Caco-2 (cell line): ENCODE measurements at regions of chr9 and their contacts with region 1.

Region 1: GRCh38 chr9:14652729-14653377 is 40.4 kb downstream of the ZDHHC21 start:
- DNase-seq: peak in 1 of 2 experiments; percentile 31
- H3K4me3 ChIP-seq: no peak overlapping the region
- H3K4me3 Mint-ChIP-seq: no peak overlapping the region
- H3K27ac Mint-ChIP-seq: no peak overlapping the region
- H3K4me1 ChIP-seq: no peaks in the 10 kb centered on the region
- H3K4me1 Mint-ChIP-seq: no peaks in the 10 kb centered on the region
- H3K27me3 ChIP-seq: no peaks in the 10 kb centered on the region
- H3K27me3 Mint-ChIP-seq: no peaks in the 10 kb centered on the region
- CTCF ChIP-seq: peak; percentile 39 to 60

Region 2: DNA sequence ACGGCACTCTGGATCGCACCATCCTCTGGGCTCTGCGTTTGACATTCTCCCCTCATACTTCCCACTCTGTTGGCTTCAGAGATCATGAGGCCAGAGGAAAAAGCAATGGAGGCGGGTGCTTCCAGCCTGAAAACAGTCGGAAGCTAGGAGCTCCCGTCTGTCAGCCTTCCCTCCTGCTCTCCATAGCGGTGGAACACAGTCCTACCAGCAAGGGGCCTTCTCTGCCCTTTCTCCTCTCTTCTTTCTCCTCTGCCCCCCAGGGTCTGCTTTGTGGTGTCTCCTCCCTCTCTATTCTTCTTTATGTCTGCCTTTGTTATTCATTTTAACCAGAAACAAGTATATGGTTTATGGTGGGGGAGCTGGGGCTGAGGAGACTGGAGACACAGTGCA is 186.4 kb before region 1 on chr9:
- CTCF ChIA-PET with region 1: interaction called, 9 read pairs
- POLR2A ChIA-PET with region 1: no interaction called
- intact Hi-C with region 1: loop called (anchors 2 kb)
- DNase-seq: no peak
- H3K4me3 ChIP-seq: no peak overlapping the region
- H3K4me3 Mint-ChIP-seq: no peak overlapping the region
- H3K27ac Mint-ChIP-seq: no peak overlapping the region
- H3K4me1 ChIP-seq: no peaks in the 10 kb centered on the region
- H3K4me1 Mint-ChIP-seq: no peaks in the 10 kb centered on the region
- H3K27me3 ChIP-seq: no peaks in the 10 kb centered on the region
- H3K27me3 Mint-ChIP-seq: peaks cover 7% of the 10 kb centered on the region
- CTCF ChIP-seq: no peak

Region 3: GRCh38 chr9:14573333-14573732 is 79.5 kb before region 1 on chr9:
- CTCF ChIA-PET with region 1: no interaction called
- POLR2A ChIA-PET with region 1: no interaction called
- intact Hi-C with region 1: no loop called
- DNase-seq: no peak
- H3K4me3 ChIP-seq: no peak overlapping the region
- H3K4me3 Mint-ChIP-seq: no peak overlapping the region
- H3K27ac Mint-ChIP-seq: no peak overlapping the region
- H3K4me1 ChIP-seq: no peaks in the 10 kb centered on the region
- H3K4me1 Mint-ChIP-seq: no peaks in the 10 kb centered on the region
- H3K27me3 ChIP-seq: no peaks in the 10 kb centered on the region
- H3K27me3 Mint-ChIP-seq: peaks cover 5% of the 10 kb centered on the region
- CTCF ChIP-seq: no peak

Region 4: GRCh38 chr9:14616188-14616982 is 36.5 kb before region 1 on chr9:
- CTCF ChIA-PET with region 1: no interaction called
- POLR2A ChIA-PET with region 1: no interaction called
- intact Hi-C with region 1: loop called (anchors 1 kb)
- DNase-seq: peak in 1 of 2 experiments; percentile 16
- H3K4me3 ChIP-seq: no peak overlapping the region
- H3K4me3 Mint-ChIP-seq: no peak overlapping the region
- H3K27ac Mint-ChIP-seq: no peak overlapping the region
- H3K4me1 ChIP-seq: no peaks in the 10 kb centered on the region
- H3K4me1 Mint-ChIP-seq: no peaks in the 10 kb centered on the region
- H3K27me3 ChIP-seq: no peaks in the 10 kb centered on the region
- H3K27me3 Mint-ChIP-seq: no peaks in the 10 kb centered on the region
- CTCF ChIP-seq: peak; percentile 42 to 45

Region 5: DNA sequence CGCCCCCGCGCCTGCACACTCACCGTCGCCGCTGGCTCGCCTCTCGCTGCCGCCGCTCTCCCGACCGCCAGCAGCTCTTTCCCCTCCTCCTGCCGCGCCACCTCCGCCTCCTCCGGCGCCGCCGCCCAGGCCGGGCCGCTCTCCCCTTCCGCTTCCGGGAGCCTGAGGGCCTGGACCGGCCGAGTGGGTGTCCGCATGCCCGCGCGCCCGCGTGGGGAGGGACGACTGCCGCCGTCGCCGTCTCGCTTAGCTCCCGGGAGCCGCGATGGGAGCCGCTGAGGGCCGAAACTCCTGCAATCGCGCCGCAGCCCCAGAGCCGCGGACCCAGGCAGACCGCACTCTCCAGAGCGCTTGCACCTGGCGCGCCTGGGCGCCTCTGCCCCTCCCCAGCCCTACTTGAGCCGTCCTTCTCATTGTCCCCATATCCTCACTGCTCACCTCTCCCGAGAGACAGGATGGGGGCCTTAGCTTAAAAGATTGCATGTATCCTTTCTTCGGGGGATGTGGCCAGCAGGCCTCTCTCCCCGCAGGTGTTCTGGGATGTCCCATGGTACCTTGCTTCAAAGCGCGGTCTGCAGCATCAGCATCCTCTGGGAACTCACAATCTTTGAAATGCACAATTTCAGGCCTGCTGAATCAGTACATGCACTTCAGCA is 40.5 kb after region 1 on chr9 and contains the start of gene ZDHHC21:
- CTCF ChIA-PET with region 1: no interaction called
- POLR2A ChIA-PET with region 1: no interaction called
- intact Hi-C with region 1: no loop called
- DNase-seq: peak; percentile 40 to 60
- H3K4me3 ChIP-seq: peak within 1 kb of the TSS; percentile 47
- H3K4me3 Mint-ChIP-seq: peak within 1 kb of the TSS; percentile 87
- H3K27ac Mint-ChIP-seq: peak within 1 kb of the TSS; percentile 80
- H3K4me1 ChIP-seq: no peaks in the 10 kb centered on the region
- H3K4me1 Mint-ChIP-seq: no peaks in the 10 kb centered on the region
- H3K27me3 ChIP-seq: no peaks in the 10 kb centered on the region
- H3K27me3 Mint-ChIP-seq: peaks cover 3% of the 10 kb centered on the region
- CTCF ChIP-seq: no peak
- total RNA-seq, gene ZDHHC21: 5.8 and 6.8 TPM in 2 replicates

Region 6: DNA sequence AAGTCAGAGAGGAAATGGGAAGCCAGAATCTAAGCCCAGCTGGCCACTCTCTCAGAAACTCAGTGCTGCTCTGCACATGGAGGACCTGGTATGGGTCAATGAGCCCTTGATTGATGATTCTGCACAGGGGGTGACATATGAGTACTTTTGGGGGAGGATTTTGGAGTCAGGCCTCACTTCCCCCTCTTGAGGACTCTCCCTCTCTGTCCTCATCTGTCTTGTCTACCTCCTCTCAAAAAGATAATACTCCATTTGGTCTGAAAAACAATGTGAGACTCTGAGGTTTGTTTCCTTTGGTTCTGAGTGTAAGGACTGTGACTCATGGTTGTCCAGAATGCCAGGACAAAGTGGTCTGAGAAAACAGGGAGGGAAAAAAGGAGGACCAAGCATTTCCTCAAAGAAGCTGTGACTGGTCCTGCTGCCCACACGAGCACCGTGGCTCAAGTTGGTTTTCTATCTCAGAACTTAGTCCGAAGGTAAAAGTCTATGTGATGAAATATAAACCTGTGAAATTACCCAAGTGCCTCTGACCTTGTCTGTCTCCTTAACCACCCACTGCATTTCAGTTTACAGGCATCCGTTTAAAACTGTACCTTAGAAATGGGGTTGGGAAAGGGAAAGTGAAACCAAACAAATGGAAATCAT is 643.0 kb after region 1 on chr9:
- CTCF ChIA-PET with region 1: no interaction called
- POLR2A ChIA-PET with region 1: no interaction called
- intact Hi-C with region 1: no loop called
- DNase-seq: no peak
- H3K4me3 ChIP-seq: no peak overlapping the region
- H3K4me3 Mint-ChIP-seq: no peak overlapping the region
- H3K27ac Mint-ChIP-seq: no peak overlapping the region
- H3K4me1 ChIP-seq: no peaks in the 10 kb centered on the region; the same call in 1 of the 2 replicates
- H3K4me1 Mint-ChIP-seq: no peaks in the 10 kb centered on the region
- H3K27me3 ChIP-seq: no peaks in the 10 kb centered on the region
- H3K27me3 Mint-ChIP-seq: no peaks in the 10 kb centered on the region
- CTCF ChIP-seq: no peak